Ascending aorta (tissue), 2 donors: ENCODE measurements at regions of chr18 and their contacts with region 1.

Region 1: GRCh38 chr18:32271672-32272208 is 81.9 kb downstream of the MEP1B start:
- DNase-seq: no peak
- H3K4me3 ChIP-seq: no peak overlapping the region
- H3K27ac ChIP-seq: no peak overlapping the region
- H3K4me1 ChIP-seq: peaks cover 0 to 9% of the 10 kb centered on the region in 2 donors
- H3K27me3 ChIP-seq: no peaks in the 10 kb centered on the region
- CTCF ChIP-seq: peak; percentile 60 to 72 (median 61)

Region 2: GRCh38 chr18:32195881-32196815 is 75.6 kb before region 1 on chr18:
- intact Hi-C with region 1: no loop called
- DNase-seq: no peak
- H3K4me3 ChIP-seq: no peak overlapping the region
- H3K27ac ChIP-seq: no peak overlapping the region
- H3K4me1 ChIP-seq: no peaks in the 10 kb centered on the region
- H3K27me3 ChIP-seq: no peaks in the 10 kb centered on the region
- CTCF ChIP-seq: no peak

Region 3: DNA sequence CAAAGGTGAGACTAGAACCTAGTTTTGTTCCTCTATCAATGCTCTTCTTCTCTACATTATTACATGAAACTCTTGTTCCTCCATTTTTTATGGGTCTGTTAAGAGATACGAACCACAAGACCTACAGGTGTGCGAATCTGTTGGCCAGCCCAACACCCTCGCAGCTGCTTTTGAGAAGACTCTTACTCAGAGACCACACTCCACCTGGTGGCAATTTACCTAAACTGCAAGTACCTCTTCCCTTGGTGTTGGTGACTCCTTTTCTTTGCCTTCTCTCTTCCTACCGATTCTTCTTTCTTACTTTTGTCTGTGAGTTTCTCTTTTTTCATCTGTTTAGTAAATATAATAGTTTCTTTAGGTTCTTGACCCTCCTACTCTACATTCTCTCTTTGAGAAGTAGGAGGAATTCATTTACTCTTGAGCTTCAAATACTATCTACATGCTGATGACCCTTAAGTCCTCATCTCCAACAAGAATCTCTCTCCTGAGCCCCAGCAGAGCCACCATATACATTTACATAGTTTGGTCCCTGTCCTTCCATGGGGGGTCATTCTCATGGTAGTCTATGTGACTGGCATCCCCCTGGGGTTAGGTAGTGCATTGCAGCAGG is 280.8 kb after region 1 on chr18:
- intact Hi-C with region 1: loop called (anchors 2 kb)
- DNase-seq: no peak
- H3K4me3 ChIP-seq: no peak overlapping the region
- H3K27ac ChIP-seq: no peak overlapping the region
- H3K4me1 ChIP-seq: no peaks in the 10 kb centered on the region
- H3K27me3 ChIP-seq: no peaks in the 10 kb centered on the region
- CTCF ChIP-seq: peak; percentile 47 to 68 (median 56)